IMR-90 (cell line): ENCODE measurements at regions of chr1 and their contacts with region 1.

Region 1: GRCh38 chr1:201222125-201222524 is 31.5 kb downstream of the IGFN1 start:
- DNase-seq: no peak
- ATAC-seq: no peak
- H3K4me3 ChIP-seq: no peak overlapping the region
- H3K27ac ChIP-seq: no peak overlapping the region
- H3K4me1 ChIP-seq: no peaks in the 10 kb centered on the region
- H3K27me3 ChIP-seq: peaks cover 37% of the 10 kb centered on the region
- CTCF ChIP-seq: no peak
- POLR2A ChIP-seq: no peak
- RAD21 ChIP-seq: no peak

Region 2: GRCh38 chr1:200971955-200972711 is 250.0 kb before region 1 on chr1:
- CTCF ChIA-PET with region 1: no interaction called
- POLR2A ChIA-PET with region 1: no interaction called
- dilution Hi-C with region 1: no loop called
- in situ Hi-C with region 1: no loop called
- intact Hi-C with region 1: loop called (anchors 1 kb)
- DNase-seq: peak; percentile 38
- ATAC-seq: peak; percentile 77
- H3K4me3 ChIP-seq: no peak overlapping the region
- H3K27ac ChIP-seq: no peak overlapping the region
- H3K4me1 ChIP-seq: no peaks in the 10 kb centered on the region
- H3K27me3 ChIP-seq: peaks cover 5% of the 10 kb centered on the region; the same call in 1 of the 2 replicates
- CTCF ChIP-seq: peak; percentile 71
- POLR2A ChIP-seq: no peak
- RAD21 ChIP-seq: peak; percentile 71

Region 3: GRCh38 chr1:201085916-201086735 is 136.0 kb before region 1 on chr1:
- CTCF ChIA-PET with region 1: no interaction called
- POLR2A ChIA-PET with region 1: no interaction called
- dilution Hi-C with region 1: no loop called
- in situ Hi-C with region 1: loop called (anchors 10 kb)
- intact Hi-C with region 1: loop called (anchors 1 kb)
- DNase-seq: peak; percentile 33
- ATAC-seq: peak; percentile 95
- H3K4me3 ChIP-seq: no peak overlapping the region
- H3K27ac ChIP-seq: no peak overlapping the region
- H3K4me1 ChIP-seq: no peaks in the 10 kb centered on the region
- H3K27me3 ChIP-seq: peaks cover 62% of the 10 kb centered on the region
- CTCF ChIP-seq: peak; percentile 66
- POLR2A ChIP-seq: no peak
- RAD21 ChIP-seq: peak; percentile 68

Region 4: DNA sequence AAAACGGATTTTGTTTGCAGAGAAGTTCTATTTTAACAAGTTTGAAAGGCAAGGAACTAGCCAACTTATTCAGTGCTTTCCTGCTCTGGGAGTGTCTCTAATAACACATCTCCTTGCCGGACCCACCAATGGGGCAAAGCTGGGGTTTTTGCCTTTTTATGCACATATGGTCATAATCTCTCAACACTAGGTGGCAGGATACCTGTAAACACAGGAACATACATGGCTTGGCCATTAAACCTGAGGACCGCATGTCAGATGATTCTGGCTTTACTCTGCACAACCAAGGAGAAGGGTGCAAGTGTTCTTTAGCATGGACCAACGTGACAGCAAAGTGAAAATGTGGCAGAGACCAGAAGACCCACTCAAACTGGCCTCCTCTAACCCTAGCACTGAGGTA is 72.7 kb before region 1 on chr1:
- CTCF ChIA-PET with region 1: interaction called, 4 read pairs
- POLR2A ChIA-PET with region 1: no interaction called
- dilution Hi-C with region 1: no loop called
- in situ Hi-C with region 1: no loop called
- intact Hi-C with region 1: loop called (anchors 1 kb)
- DNase-seq: peak; percentile 44
- ATAC-seq: no peak
- H3K4me3 ChIP-seq: no peak overlapping the region
- H3K27ac ChIP-seq: no peak overlapping the region
- H3K4me1 ChIP-seq: no peaks in the 10 kb centered on the region
- H3K27me3 ChIP-seq: no peaks in the 10 kb centered on the region
- CTCF ChIP-seq: peak; percentile 44; the same call in 1 of the 2 replicates
- POLR2A ChIP-seq: no peak
- RAD21 ChIP-seq: peak; percentile 43

Region 5: GRCh38 chr1:201184307-201185122 is 37.6 kb before region 1 on chr1:
- CTCF ChIA-PET with region 1: interaction called, 3 read pairs
- POLR2A ChIA-PET with region 1: no interaction called
- dilution Hi-C with region 1: no loop called
- in situ Hi-C with region 1: no loop called
- intact Hi-C with region 1: loop called (anchors 2 kb)
- DNase-seq: peak; percentile 88
- ATAC-seq: peak; percentile 100
- H3K4me3 ChIP-seq: no peak overlapping the region
- H3K27ac ChIP-seq: no peak overlapping the region
- H3K4me1 ChIP-seq: peaks cover 5% of the 10 kb centered on the region
- H3K27me3 ChIP-seq: peaks cover 8% of the 10 kb centered on the region; the same call in 1 of the 2 replicates
- CTCF ChIP-seq: peak; percentile 81
- POLR2A ChIP-seq: no peak
- RAD21 ChIP-seq: peak; percentile 69